Gastrocnemius medialis (tissue), 4 donors: ENCODE measurements at regions of chr17 and their contacts with region 1.

Region 1: GRCh38 chr17:78415821-78416711 is 37.6 kb downstream of the PGS1 start:
- DNase-seq: no peak
- ATAC-seq: no peak
- H3K4me3 ChIP-seq: no peak overlapping the region
- H3K27ac ChIP-seq: peak overlapping the region; percentile 70 to 98 (median 94)
- H3K4me1 ChIP-seq: peaks cover 48 to 68% of the 10 kb centered on the region in 2 donors
- H3K27me3 ChIP-seq: no peaks in the 10 kb centered on the region
- CTCF ChIP-seq: no peak
- POLR2A ChIP-seq: no peak

Region 2: GRCh38 chr17:78378225-78379130 is 37.6 kb before region 1 on chr17 and contains the start of gene PGS1:
- in situ Hi-C with region 1: loop called in 1 of 4 experiments (anchors 10 kb)
- intact Hi-C with region 1: loop called (anchors 2 kb)
- DNase-seq: peak; percentile 55 to 64
- ATAC-seq: peak; percentile 75 to 80
- H3K4me3 ChIP-seq: peak within 1 kb of the TSS; percentile 74 to 99 (median 96)
- H3K27ac ChIP-seq: peak within 1 kb of the TSS; percentile 84 to 91 (median 86)
- H3K4me1 ChIP-seq: peaks cover 36 to 42% of the 10 kb centered on the region in 2 donors
- H3K27me3 ChIP-seq: no peaks in the 10 kb centered on the region
- CTCF ChIP-seq: peak in 1 of 5 experiments; percentile 20
- POLR2A ChIP-seq: peak; percentile 93 to 96
- total RNA-seq, gene PGS1: 16.6 to 30.0 (median 21.8) TPM